ENCODE measurements at regions of chr12 and their contacts with region 1.

Region 1: GRCh38 chr12:88993651-88994050 is 358.6 kb downstream of the DUSP6 start:
- DNase-seq: peak; percentile 84
- H3K4me3 ChIP-seq: no peak overlapping the region
- H3K27ac ChIP-seq: no peak overlapping the region
- H3K4me1 ChIP-seq: peaks cover 9% of the 10 kb centered on the region
- H3K27me3 ChIP-seq: no peaks in the 10 kb centered on the region
- CTCF ChIP-seq: peak; percentile 36 to 37
- POLR2A ChIP-seq: no peak

Region 2: DNA sequence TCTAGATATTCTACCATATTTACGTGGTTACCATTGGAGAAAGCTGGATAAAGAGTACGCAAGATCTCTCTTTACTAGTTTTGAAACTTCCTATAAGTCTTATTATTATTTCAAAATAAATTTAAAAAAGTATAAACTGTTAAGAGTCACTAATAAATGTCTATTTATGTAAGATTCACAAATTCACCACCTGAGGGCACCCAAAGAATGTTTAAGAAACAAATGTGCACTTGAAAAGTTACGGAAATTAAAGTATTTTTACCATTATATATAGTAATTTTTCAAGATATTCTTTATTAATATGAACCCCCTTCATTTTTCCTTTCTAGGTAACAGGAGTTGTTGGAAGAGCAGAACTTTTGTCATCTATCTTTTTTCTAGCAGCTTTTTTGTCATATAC is 839.7 kb before region 1 on chr12:
- CTCF ChIA-PET with region 1: interaction called, 44 read pairs
- POLR2A ChIA-PET with region 1: no interaction called
- dilution Hi-C with region 1: no loop called
- intact Hi-C with region 1: loop called (anchors 1 kb)
- DNase-seq: peak; percentile 62
- H3K4me3 ChIP-seq: no peak overlapping the region
- H3K27ac ChIP-seq: no peak overlapping the region
- H3K4me1 ChIP-seq: no peaks in the 10 kb centered on the region
- H3K27me3 ChIP-seq: no peaks in the 10 kb centered on the region
- CTCF ChIP-seq: peak in 1 of 2 donors; percentile 2
- POLR2A ChIP-seq: no peak

Region 3: GRCh38 chr12:88393017-88393767 is 600.5 kb before region 1 on chr12:
- CTCF ChIA-PET with region 1: interaction called, 3 read pairs
- POLR2A ChIA-PET with region 1: no interaction called
- dilution Hi-C with region 1: no loop called
- intact Hi-C with region 1: loop called (anchors 10 kb)
- DNase-seq: peak; percentile 53
- H3K4me3 ChIP-seq: no peak overlapping the region
- H3K27ac ChIP-seq: no peak overlapping the region
- H3K4me1 ChIP-seq: no peaks in the 10 kb centered on the region
- H3K27me3 ChIP-seq: no peaks in the 10 kb centered on the region
- CTCF ChIP-seq: peak; percentile 36 to 50
- POLR2A ChIP-seq: no peak

Region 4: DNA sequence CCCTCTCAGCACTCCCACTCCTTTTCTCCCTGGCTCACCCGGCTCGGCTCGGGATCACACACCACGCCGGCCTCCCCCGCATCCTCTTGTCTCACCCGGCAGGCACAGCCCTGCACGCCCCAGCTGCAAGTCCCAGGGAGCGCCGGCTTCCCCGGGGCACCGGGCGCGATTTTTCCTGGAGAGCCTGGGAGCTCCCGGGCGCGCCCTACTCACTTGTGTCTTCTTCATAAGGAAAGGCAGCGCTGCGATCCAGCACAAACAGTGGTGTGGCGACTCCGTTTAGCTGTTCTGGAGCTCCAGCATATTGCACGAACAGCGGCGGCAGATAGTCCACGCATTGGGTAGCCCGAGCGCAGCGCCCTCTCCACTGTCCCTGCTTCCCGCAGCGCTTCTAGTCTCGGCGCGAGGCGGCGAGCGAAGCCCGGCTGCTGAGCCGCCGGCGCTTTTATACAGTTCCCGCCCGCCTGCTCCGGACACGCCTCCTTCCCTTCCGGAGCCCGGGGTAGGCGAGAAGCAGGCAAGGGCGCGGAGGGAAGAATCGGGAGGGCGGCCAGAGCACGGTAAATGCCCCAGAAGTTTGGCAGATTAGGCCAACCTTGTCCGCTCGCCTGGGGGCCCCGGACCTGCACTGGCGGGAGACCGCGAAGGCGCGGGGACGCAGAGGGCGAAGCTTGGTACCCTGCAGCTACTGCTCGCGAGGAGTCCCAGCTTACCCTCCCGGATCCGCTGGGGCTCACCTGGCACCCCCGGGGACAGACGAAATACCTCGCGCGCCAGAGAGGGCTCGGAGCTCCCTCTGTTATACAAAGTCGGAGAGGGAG is 413.4 kb before region 1 on chr12 and contains the start of gene KITLG:
- CTCF ChIA-PET with region 1: interaction called, 55 read pairs
- POLR2A ChIA-PET with region 1: interaction called, 5 read pairs
- dilution Hi-C with region 1: no loop called
- intact Hi-C with region 1: loop called (anchors 1 kb)
- DNase-seq: peak; percentile 88
- H3K4me3 ChIP-seq: peak within 1 kb of the TSS; percentile 54 to 69 (median 62)
- H3K27ac ChIP-seq: peak within 1 kb of the TSS; percentile 37
- H3K4me1 ChIP-seq: peaks cover 17% of the 10 kb centered on the region
- H3K27me3 ChIP-seq: no peaks in the 10 kb centered on the region
- CTCF ChIP-seq: peak; percentile 9 to 51
- POLR2A ChIP-seq: peak; percentile 99
- total RNA-seq, gene KITLG: 32.5 and 46.4 TPM in 2 replicates

Region 5: GRCh38 chr12:88638966-88639760 is 354.5 kb before region 1 on chr12:
- CTCF ChIA-PET with region 1: interaction called, 33 read pairs
- POLR2A ChIA-PET with region 1: no interaction called
- dilution Hi-C with region 1: no loop called
- intact Hi-C with region 1: no loop called
- DNase-seq: peak; percentile 60
- H3K4me3 ChIP-seq: no peak overlapping the region
- H3K27ac ChIP-seq: peak overlapping the region; percentile 59
- H3K4me1 ChIP-seq: peaks cover 16% of the 10 kb centered on the region
- H3K27me3 ChIP-seq: no peaks in the 10 kb centered on the region
- CTCF ChIP-seq: no peak
- POLR2A ChIP-seq: no peak

Region 6: GRCh38 chr12:88952562-88952942 is 41.1 kb before region 1 on chr12:
- CTCF ChIA-PET with region 1: interaction called, 14 read pairs
- POLR2A ChIA-PET with region 1: no interaction called
- dilution Hi-C with region 1: no loop called
- intact Hi-C with region 1: no loop called
- DNase-seq: peak; percentile 82
- H3K4me3 ChIP-seq: no peak overlapping the region
- H3K27ac ChIP-seq: no peak overlapping the region
- H3K4me1 ChIP-seq: peaks cover 19% of the 10 kb centered on the region
- H3K27me3 ChIP-seq: no peaks in the 10 kb centered on the region
- CTCF ChIP-seq: no peak
- POLR2A ChIP-seq: no peak

Region 7: DNA sequence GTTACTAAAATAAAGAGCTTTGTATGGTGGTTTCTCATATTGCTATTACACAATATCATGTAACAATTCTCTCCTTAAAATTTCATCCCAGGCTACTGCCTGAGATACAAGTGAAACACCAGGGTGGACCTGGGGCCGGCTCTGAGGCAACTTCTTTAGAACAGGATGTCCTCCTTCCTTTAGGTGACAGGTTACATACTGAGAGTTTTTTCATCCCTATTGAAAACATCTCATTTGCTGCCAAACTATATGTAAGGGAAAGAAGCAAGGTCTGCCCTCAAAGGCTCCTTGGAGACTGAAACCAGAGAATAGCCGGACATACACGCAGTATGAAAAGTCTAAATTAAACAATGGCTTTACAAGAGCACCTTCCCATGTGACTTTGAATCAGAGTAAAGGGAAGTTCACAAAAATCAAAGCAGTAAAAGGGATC is 218.7 kb after region 1 on chr12:
- CTCF ChIA-PET with region 1: no interaction called
- POLR2A ChIA-PET with region 1: no interaction called
- dilution Hi-C with region 1: no loop called
- intact Hi-C with region 1: no loop called
- DNase-seq: peak; percentile 85
- H3K4me3 ChIP-seq: no peak overlapping the region
- H3K27ac ChIP-seq: peak overlapping the region; percentile 27
- H3K4me1 ChIP-seq: peaks cover 7% of the 10 kb centered on the region
- H3K27me3 ChIP-seq: no peaks in the 10 kb centered on the region
- CTCF ChIP-seq: no peak
- POLR2A ChIP-seq: no peak

Region 8: GRCh38 chr12:89267404-89267803 is 273.8 kb after region 1 on chr12:
- CTCF ChIA-PET with region 1: no interaction called
- POLR2A ChIA-PET with region 1: no interaction called
- dilution Hi-C with region 1: no loop called
- intact Hi-C with region 1: no loop called
- DNase-seq: no peak
- H3K4me3 ChIP-seq: no peak overlapping the region
- H3K27ac ChIP-seq: no peak overlapping the region
- H3K4me1 ChIP-seq: no peaks in the 10 kb centered on the region
- H3K27me3 ChIP-seq: no peaks in the 10 kb centered on the region
- CTCF ChIP-seq: no peak
- POLR2A ChIP-seq: no peak

Region 9: GRCh38 chr12:89632778-89633177 is 639.1 kb after region 1 on chr12:
- CTCF ChIA-PET with region 1: no interaction called
- POLR2A ChIA-PET with region 1: no interaction called
- dilution Hi-C with region 1: no loop called
- intact Hi-C with region 1: no loop called
- DNase-seq: no peak
- H3K4me3 ChIP-seq: no peak overlapping the region
- H3K27ac ChIP-seq: no peak overlapping the region
- H3K4me1 ChIP-seq: no peaks in the 10 kb centered on the region
- H3K27me3 ChIP-seq: no peaks in the 10 kb centered on the region
- CTCF ChIP-seq: no peak
- POLR2A ChIP-seq: no peak

Measured in endothelial cell of umbilical vein (primary cell).